ENCODE measurements at regions of chr6 and their contacts with region 1.

Region 1: DNA sequence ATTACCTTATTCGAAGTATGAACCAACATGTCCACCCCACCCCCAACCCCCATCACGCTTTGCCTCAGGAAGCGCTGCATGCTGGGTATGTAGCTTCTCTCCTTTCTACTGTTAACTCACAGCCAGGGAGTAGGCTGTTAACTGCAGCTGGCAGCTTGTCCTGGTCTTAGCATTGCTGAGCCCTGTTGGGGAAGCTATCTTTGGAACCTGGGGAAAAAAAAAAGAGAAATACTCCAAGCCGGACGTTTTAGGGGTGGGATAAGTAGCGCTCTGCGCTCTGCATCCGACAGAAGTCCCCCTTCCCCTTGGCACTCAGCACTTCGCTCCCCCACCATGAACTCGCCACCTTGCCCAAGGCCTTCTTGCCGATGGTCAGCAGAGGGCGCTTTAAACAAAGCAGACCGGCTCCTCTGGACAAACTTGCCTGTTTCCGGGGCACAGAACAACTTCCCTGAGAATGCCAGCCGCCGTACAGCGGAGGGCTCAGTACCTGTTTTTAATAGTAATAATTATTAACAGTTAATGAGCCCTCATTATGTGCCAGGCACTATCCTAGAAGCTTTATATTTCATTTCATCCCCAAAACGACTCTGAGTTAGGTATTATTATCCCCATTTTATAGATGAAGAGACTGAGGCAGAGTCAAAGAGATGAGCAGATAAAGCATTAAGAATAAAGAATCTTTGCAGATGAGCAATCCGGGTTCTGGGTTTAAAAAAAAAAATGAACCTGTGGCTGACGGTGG is 35.2 kb upstream of the MDFI start:
- DNase-seq: peak; percentile 84 to 88 (median 84)
- ATAC-seq: peak; percentile 62 to 87 (median 81)
- H3K4me3 ChIP-seq: peak overlapping the region in 9 of 12 donors; percentile 2 to 40 (median 17)
- H3K27ac ChIP-seq: peak overlapping the region in 3 of 12 donors; percentile 5 to 52 (median 51)
- H3K4me1 ChIP-seq: peaks cover 0 to 11% (median 3%) of the 10 kb centered on the region in 12 donors
- H3K27me3 ChIP-seq: no peaks in the 10 kb centered on the region
- CTCF ChIP-seq: peak; percentile 77 to 96 (median 90)
- POLR2A ChIP-seq: no peak

Region 2: GRCh38 chr6:41442800-41443501 is 160.1 kb before region 1 on chr6:
- intact Hi-C with region 1: no loop called
- DNase-seq: peak in 4 of 5 donors; percentile 44 to 75 (median 56)
- ATAC-seq: peak; percentile 15 to 70 (median 59)
- H3K4me3 ChIP-seq: peak overlapping the region in 9 of 12 donors; percentile 6 to 39 (median 33)
- H3K27ac ChIP-seq: peak overlapping the region in 8 of 12 donors; percentile 37 to 83 (median 70)
- H3K4me1 ChIP-seq: peaks cover 0 to 24% (median 11%) of the 10 kb centered on the region in 12 donors
- H3K27me3 ChIP-seq: peaks cover 0 to 14% (median 8%) of the 10 kb centered on the region in 9 donors
- CTCF ChIP-seq: peak in 10 of 12 donors; percentile 9 to 50 (median 34)
- POLR2A ChIP-seq: no peak

Region 3: DNA sequence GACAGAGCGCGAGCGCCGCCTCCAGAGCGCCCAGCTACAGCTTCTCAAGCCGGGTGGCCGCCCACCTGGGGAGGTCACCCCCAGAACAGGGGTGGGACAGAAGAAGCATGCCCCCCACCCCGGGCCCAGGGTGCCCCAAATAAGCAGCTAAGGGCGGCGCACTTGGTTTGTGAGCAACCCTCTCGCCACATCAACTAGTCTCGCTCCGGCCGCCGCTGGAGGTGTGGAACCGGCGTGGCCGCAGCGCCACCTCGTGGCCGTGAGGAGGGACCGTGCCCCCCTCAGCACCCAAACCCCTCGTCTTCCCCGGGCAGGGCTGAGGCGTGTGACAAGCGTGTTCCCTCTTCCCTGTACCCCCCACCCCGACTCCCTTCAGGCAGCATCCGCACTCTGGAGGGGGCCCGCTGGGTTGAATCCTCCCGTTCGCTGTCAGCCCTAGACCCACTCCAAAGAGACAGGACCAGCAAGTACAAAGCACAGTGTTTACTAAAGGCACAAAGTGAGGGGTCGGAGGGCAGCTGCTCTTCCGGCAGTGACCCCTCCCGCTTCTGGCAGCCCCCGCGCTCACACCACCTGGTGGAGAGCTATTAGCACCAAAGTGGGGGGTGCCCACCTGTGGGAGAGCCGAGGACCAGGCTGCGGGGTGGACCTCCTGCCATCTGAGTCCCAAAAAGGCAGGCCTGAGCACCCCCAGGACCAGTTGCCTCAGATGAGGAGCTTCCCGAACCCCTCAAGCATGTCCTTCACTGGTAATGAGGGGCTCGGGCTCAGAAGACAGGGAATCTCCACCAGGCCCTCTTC is 80.7 kb after region 1 on chr6:
- intact Hi-C with region 1: loop called (anchors 1 to 2 kb)
- DNase-seq: peak; percentile 80 to 91 (median 84)
- ATAC-seq: peak; percentile 59 to 82 (median 78)
- H3K4me3 ChIP-seq: peak overlapping the region; percentile 5 to 66 (median 55)
- H3K27ac ChIP-seq: peak overlapping the region; percentile 66 to 91 (median 82)
- H3K4me1 ChIP-seq: peaks cover 0 to 35% (median 20%) of the 10 kb centered on the region in 12 donors
- H3K27me3 ChIP-seq: no peaks in the 10 kb centered on the region
- CTCF ChIP-seq: peak; percentile 86 to 97 (median 93)
- POLR2A ChIP-seq: no peak

Measured in heart left ventricle (tissue), 16 donors.